PC-9 (cell line): ENCODE measurements at regions of chr21 and their contacts with region 1.

Region 1: DNA sequence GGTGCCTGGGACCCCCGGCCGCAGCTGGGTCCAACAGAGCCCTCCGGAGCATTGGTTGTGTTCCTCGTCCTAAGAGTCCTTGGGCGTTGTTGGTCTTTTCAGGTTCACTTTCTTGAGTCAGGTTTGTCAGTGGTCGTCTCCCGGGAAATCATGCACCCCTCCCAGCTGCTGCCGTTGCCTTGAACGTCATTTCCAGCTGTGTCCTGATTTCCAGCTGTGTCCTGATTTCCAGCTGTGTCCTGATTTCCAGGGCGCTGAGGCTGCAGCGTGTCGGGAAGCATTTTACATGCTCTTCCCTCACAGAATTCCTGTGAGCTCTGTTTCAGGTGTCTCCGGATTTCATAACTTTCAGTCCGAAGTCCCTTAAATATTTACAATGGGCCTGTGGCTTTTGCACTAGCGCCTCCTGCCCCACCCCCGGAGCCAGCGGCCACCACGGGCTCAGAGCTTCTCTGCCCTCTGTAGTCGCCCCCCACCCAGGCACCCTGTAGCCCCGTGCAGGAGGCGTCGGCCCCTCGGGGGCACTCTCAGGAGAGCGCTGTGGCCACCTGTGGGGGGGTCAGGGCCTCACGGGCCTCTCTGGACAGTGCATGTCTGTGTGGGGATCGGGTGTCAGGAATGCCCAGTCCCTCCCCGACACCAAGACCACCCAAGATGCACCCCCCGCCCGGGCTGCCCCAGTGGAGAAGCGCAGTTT is 66.7 kb downstream of the COL18A1 start:
- DNase-seq: no peak
- H3K4me3 ChIP-seq: peak overlapping the region; percentile 38; the same call in 1 of the 2 replicates
- H3K27ac ChIP-seq: peak overlapping the region; percentile 67
- H3K4me1 ChIP-seq: peaks cover 16% of the 10 kb centered on the region
- H3K27me3 ChIP-seq: no peaks in the 10 kb centered on the region
- CTCF ChIP-seq: no peak

Region 2: GRCh38 chr21:45460611-45461368 is 10.9 kb before region 1 on chr21:
- CTCF ChIA-PET with region 1: no interaction called
- POLR2A ChIA-PET with region 1: interaction called, 13 read pairs
- intact Hi-C with region 1: no loop called
- DNase-seq: no peak
- H3K4me3 ChIP-seq: no peak overlapping the region
- H3K27ac ChIP-seq: no peak overlapping the region
- H3K4me1 ChIP-seq: no peaks in the 10 kb centered on the region
- H3K27me3 ChIP-seq: no peaks in the 10 kb centered on the region
- CTCF ChIP-seq: no peak

Region 3: GRCh38 chr21:45517249-45518065 is 45.8 kb after region 1 on chr21:
- CTCF ChIA-PET with region 1: no interaction called
- POLR2A ChIA-PET with region 1: no interaction called
- intact Hi-C with region 1: no loop called
- DNase-seq: peak in 1 of 2 experiments; percentile 54
- H3K4me3 ChIP-seq: no peak overlapping the region
- H3K27ac ChIP-seq: peak overlapping the region; percentile 78
- H3K4me1 ChIP-seq: peaks cover 50% of the 10 kb centered on the region
- H3K27me3 ChIP-seq: no peaks in the 10 kb centered on the region
- CTCF ChIP-seq: no peak